PC-9 (cell line): ENCODE measurements at regions of chr18 and their contacts with region 1.

Region 1: GRCh38 chr18:41073372-41073954 is 881.6 kb upstream of the PIK3C3 start:
- DNase-seq: peak in 1 of 2 experiments; percentile 48
- H3K4me3 ChIP-seq: no peak overlapping the region
- H3K27ac ChIP-seq: no peak overlapping the region
- H3K4me1 ChIP-seq: no peaks in the 10 kb centered on the region
- H3K27me3 ChIP-seq: no peaks in the 10 kb centered on the region
- CTCF ChIP-seq: no peak

Region 2: DNA sequence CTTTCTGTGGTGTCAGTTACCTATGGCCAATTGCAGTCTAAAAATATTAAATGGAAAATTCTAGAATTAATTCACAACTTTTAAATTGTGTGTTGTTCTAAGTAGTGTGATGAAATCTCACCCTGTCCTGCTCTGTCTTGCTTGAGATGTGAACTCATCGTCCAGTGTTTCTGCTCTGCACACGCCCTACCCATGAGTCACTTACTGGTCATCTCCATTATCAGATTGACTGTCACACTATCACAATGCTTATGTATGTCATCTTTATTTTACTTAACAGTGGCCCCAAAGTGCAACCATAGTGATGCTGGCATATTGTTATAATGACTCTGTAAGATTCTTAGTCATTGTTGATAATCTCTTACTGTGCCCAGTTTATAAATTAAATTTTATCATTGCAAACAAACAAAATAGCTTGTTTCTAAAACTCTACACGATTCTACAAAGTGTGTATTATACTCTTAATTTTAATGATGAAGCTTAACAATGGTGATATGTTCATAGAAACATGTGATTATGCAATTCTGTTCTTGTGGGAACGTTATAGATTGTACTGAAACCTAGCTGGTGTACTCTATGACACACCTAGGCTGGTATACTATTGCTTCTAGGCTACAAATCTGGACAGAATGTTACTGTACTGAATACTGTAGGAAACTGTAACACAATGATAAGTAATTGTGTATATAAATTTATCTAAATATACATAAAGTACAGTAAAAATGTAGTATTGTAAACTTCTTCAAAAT is 205.2 kb before region 1 on chr18:
- CTCF ChIA-PET with region 1: no interaction called
- POLR2A ChIA-PET with region 1: no interaction called
- intact Hi-C with region 1: loop called (anchors 5 kb)
- DNase-seq: peak; percentile 15 to 59
- H3K4me3 ChIP-seq: no peak overlapping the region
- H3K27ac ChIP-seq: peak overlapping the region; percentile 93
- H3K4me1 ChIP-seq: peaks cover 17% of the 10 kb centered on the region
- H3K27me3 ChIP-seq: no peaks in the 10 kb centered on the region
- CTCF ChIP-seq: no peak

Region 3: DNA sequence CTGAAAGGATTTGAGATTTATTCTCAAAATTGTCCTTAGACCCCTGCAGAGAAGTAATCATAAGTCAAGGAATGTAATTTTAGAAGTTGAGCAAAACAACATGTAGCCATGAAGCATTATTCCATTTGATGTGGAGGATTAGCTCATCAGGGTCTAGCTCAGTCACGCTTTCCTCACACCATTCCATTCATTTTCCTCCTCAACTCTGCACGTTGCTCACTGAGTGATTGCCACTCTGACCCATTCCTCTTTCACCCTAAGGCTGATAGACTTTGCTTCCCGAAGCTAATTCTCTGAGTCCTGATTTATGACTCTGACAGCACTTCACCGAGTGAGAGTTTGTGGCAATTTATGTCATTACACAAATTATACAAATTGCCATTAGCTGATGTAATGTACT is 61.0 kb after region 1 on chr18:
- CTCF ChIA-PET with region 1: no interaction called
- POLR2A ChIA-PET with region 1: no interaction called
- intact Hi-C with region 1: no loop called
- DNase-seq: no peak
- H3K4me3 ChIP-seq: no peak overlapping the region
- H3K27ac ChIP-seq: no peak overlapping the region
- H3K4me1 ChIP-seq: no peaks in the 10 kb centered on the region
- H3K27me3 ChIP-seq: no peaks in the 10 kb centered on the region
- CTCF ChIP-seq: no peak

Region 4: DNA sequence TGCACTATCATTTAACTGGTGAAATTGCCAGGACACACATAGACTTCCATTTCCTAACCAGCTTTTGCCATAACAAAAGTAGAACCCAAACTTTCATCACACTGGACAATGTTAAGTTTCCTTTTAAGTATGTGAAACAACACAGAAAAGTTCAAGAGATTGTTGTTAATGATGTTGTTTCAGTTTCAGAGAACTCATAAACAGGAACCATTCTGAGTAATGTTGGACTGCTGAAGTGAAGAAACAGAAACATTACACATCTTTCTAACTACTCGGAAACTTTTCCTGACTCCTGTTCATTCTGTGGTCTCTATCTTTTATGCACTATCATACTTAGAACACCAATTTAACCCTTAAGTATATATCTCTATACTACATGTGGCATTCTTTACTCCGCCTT is 1862.8 kb after region 1 on chr18:
- CTCF ChIA-PET with region 1: no interaction called
- POLR2A ChIA-PET with region 1: no interaction called
- intact Hi-C with region 1: no loop called
- DNase-seq: no peak
- H3K4me3 ChIP-seq: no peak overlapping the region
- H3K27ac ChIP-seq: no peak overlapping the region
- H3K4me1 ChIP-seq: no peaks in the 10 kb centered on the region
- H3K27me3 ChIP-seq: no peaks in the 10 kb centered on the region
- CTCF ChIP-seq: no peak